Activated naive CD4-positive, alpha-beta T cell treated with anti-CD3 and anti-CD28 coated beads for 36 hours (primary cell): ENCODE measurements at regions of chr19 and their contacts with region 1.

Region 1: GRCh38 chr19:13212759-13213330 is 62.6 kb downstream of the IER2 start:
- DNase-seq: peak; percentile 89
- H3K4me3 Mint-ChIP-seq: no peak overlapping the region
- H3K27ac Mint-ChIP-seq: no peak overlapping the region
- H3K4me1 Mint-ChIP-seq: peaks cover 33% of the 10 kb centered on the region
- H3K27me3 Mint-ChIP-seq: no peaks in the 10 kb centered on the region

Region 2: GRCh38 chr19:13155472-13156359 is 57.1 kb before region 1 on chr19:
- CTCF ChIA-PET with region 1: no interaction called
- intact Hi-C with region 1: loop called (anchors 1 kb)
- DNase-seq: peak; percentile 86
- H3K4me3 Mint-ChIP-seq: peak overlapping the region; percentile 99
- H3K27ac Mint-ChIP-seq: peak overlapping the region; percentile 100
- H3K4me1 Mint-ChIP-seq: peaks cover 40% of the 10 kb centered on the region
- H3K27me3 Mint-ChIP-seq: no peaks in the 10 kb centered on the region

Region 3: GRCh38 chr19:13162518-13163314 is 50.1 kb before region 1 on chr19:
- CTCF ChIA-PET with region 1: no interaction called
- intact Hi-C with region 1: loop called (anchors 1 kb)
- DNase-seq: peak; percentile 98
- H3K4me3 Mint-ChIP-seq: peak overlapping the region; percentile 79
- H3K27ac Mint-ChIP-seq: peak overlapping the region; percentile 97
- H3K4me1 Mint-ChIP-seq: peaks cover 65% of the 10 kb centered on the region
- H3K27me3 Mint-ChIP-seq: no peaks in the 10 kb centered on the region

Region 4: DNA sequence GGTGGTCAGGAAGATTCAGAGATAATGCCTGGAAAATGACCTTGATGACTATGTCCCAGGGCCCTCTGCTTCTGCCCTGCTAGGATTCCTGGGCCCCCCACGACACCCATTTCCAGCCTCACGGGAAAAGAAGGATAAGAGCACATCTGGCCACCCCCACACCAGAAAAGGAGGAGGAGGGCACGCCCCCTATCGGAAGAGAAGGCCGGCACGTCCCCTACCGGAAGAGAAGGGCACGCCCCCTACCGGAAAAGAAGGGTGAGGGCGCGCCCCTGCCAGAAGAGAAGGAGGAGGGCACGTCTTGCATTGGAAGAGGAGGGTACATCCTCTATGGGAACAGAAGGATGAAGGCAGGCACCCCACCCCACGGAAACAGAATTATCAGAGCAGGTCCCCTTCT is 21.7 kb after region 1 on chr19:
- CTCF ChIA-PET with region 1: interaction called, 3 read pairs
- intact Hi-C with region 1: loop called (anchors 2 kb)
- DNase-seq: peak; percentile 82
- H3K4me3 Mint-ChIP-seq: peak overlapping the region; percentile 4
- H3K27ac Mint-ChIP-seq: peak overlapping the region; percentile 50
- H3K4me1 Mint-ChIP-seq: peaks cover 13% of the 10 kb centered on the region
- H3K27me3 Mint-ChIP-seq: no peaks in the 10 kb centered on the region

Region 5: DNA sequence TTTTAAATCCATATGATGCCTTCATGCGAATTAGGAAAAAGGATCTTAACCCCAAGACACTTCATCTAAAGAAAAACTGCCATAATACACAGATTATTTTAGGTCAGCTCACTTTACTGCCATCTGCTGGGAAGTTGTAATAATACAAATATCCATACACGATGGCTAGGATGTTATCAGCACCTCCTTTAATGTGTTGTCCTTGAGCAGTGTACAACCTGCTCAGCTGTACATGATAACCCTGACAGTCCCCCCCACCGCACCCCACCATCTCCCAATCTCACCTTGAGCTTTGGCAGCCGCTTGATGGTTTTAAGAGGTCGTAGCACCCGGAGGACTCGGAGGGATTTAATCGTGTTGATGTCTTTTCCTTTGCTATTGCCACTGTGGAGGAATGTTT is 49.6 kb after region 1 on chr19:
- CTCF ChIA-PET with region 1: interaction called, 9 read pairs
- intact Hi-C with region 1: loop called (anchors 1 kb)
- DNase-seq: no peak
- H3K4me3 Mint-ChIP-seq: no peak overlapping the region
- H3K27ac Mint-ChIP-seq: no peak overlapping the region
- H3K4me1 Mint-ChIP-seq: peaks cover 15% of the 10 kb centered on the region
- H3K27me3 Mint-ChIP-seq: peaks cover 9% of the 10 kb centered on the region

Region 6: DNA sequence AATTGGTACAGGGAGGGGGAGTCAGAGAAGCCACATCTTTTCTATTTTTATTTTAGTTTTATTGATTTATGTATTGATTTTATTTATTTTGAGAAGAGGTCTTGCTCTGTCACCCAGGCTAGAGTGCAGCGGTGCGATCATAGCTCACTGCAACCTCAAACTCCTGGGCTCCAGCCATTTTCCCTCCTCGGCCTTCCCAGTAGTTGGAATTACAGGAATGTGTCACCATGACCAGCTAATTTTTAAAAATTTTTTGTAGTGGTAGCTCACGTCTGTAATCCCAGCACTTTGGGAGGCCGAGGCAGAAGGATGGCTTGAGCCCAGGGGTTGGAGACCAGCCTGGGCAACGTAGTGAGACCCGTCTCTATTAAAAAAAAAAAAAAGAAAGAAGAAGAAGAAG is 822.9 kb after region 1 on chr19:
- CTCF ChIA-PET with region 1: no interaction called
- intact Hi-C with region 1: no loop called
- DNase-seq: no peak
- H3K4me3 Mint-ChIP-seq: no peak overlapping the region
- H3K27ac Mint-ChIP-seq: no peak overlapping the region
- H3K4me1 Mint-ChIP-seq: peaks cover 33% of the 10 kb centered on the region
- H3K27me3 Mint-ChIP-seq: no peaks in the 10 kb centered on the region